ENCODE measurements at regions of chr10 and their contacts with region 1.

Region 1: GRCh38 chr10:30591249-30591670 is 38.3 kb downstream of the LYZL2 start:
- DNase-seq: peak; percentile 55
- H3K4me3 Mint-ChIP-seq: no peak overlapping the region
- H3K27ac Mint-ChIP-seq: no peak overlapping the region
- H3K4me1 Mint-ChIP-seq: no peaks in the 10 kb centered on the region
- H3K27me3 Mint-ChIP-seq: no peaks in the 10 kb centered on the region

Region 2: DNA sequence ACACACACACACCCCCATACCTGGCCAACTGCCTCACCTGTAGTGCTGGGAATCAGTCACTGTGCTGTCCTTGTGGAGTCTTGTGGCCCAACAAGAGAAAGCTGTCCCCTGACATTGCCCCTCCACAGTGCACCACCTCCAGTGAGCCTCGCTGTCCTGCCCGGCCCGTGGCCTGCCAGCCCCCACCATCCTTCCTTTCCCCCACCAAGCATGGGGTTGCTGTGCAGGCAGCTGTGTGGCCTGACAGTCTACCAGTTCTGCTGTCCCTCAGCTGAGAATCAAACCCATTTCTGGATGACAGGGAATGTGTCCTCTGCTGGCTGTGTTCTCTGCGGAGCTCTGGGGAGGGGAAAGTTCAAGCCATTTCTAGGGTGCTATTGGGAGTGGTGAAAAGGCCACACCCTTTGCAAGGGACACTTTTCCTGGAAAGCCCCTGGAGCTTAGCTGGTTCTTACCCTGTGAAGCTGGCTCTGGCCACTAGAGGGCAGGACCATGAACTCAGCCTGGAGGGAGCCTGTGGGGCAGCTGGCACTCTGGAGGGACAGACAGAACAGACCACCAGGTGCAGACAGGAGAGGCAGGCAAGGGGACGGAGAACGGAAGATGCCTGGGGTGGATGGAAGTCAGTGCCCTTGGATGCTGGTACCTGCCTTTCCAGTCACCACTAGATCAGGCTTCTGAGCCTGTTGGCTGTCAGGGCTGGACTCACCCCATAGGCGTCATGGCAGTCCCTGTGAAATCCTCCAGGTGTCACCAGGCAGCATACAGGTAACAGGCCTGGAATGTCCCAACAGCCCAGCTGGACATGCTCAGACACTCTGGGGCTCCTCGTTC is 231.7 kb before region 1 on chr10:
- CTCF ChIA-PET with region 1: interaction called, 16 read pairs
- intact Hi-C with region 1: no loop called
- DNase-seq: peak; percentile 78
- H3K4me3 Mint-ChIP-seq: no peak overlapping the region
- H3K27ac Mint-ChIP-seq: no peak overlapping the region
- H3K4me1 Mint-ChIP-seq: peaks cover 2% of the 10 kb centered on the region
- H3K27me3 Mint-ChIP-seq: no peaks in the 10 kb centered on the region

Region 3: GRCh38 chr10:30398788-30399187 is 192.5 kb before region 1 on chr10:
- CTCF ChIA-PET with region 1: interaction called, 84 read pairs
- intact Hi-C with region 1: loop called (anchors 1 kb)
- DNase-seq: peak; percentile 30
- H3K4me3 Mint-ChIP-seq: no peak overlapping the region
- H3K27ac Mint-ChIP-seq: no peak overlapping the region
- H3K4me1 Mint-ChIP-seq: peaks cover 13% of the 10 kb centered on the region
- H3K27me3 Mint-ChIP-seq: no peaks in the 10 kb centered on the region

Region 4: DNA sequence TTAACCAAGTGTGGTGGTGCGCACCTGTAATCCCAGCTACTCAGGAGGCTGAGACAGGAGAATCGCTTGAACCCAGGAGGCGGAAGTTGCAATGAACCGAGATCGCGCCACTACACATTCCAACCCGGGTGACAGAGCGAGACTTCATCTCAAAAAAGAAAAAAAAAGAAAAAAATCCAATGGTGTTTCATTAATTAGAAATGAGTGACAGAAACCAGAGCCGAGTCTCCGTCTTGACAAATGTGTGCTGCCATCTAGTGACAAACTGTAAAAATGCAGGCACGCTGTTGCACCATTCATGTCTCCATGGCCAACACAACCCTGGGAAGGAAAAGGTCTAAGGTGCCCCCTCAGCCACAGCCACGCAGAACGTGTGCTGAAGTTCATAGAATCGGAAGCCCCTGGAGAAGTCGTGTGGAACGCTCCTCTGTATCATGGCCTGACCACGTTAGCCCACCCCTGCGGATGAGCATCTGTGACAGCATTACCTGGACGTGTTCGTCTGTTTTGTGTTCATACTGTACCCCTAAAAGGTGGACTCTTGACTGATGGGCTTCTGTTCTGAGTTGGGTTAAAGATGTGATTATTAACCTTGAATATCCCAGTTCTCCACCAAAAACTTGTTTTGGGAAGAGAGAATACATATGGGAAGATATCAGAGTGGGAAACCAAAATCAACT is 56.7 kb before region 1 on chr10:
- CTCF ChIA-PET with region 1: interaction called, 13 read pairs
- intact Hi-C with region 1: loop called (anchors 1 kb)
- DNase-seq: peak; percentile 87
- H3K4me3 Mint-ChIP-seq: no peak overlapping the region
- H3K27ac Mint-ChIP-seq: no peak overlapping the region
- H3K4me1 Mint-ChIP-seq: peaks cover 14% of the 10 kb centered on the region
- H3K27me3 Mint-ChIP-seq: no peaks in the 10 kb centered on the region

Region 5: GRCh38 chr10:30639946-30640786 is 48.9 kb after region 1 on chr10:
- CTCF ChIA-PET with region 1: interaction called, 13 read pairs
- intact Hi-C with region 1: no loop called
- DNase-seq: peak; percentile 28
- H3K4me3 Mint-ChIP-seq: no peak overlapping the region
- H3K27ac Mint-ChIP-seq: no peak overlapping the region
- H3K4me1 Mint-ChIP-seq: peaks cover 3% of the 10 kb centered on the region
- H3K27me3 Mint-ChIP-seq: peaks cover 26% of the 10 kb centered on the region

Region 6: GRCh38 chr10:30763918-30764317 is 172.7 kb after region 1 on chr10:
- CTCF ChIA-PET with region 1: no interaction called
- intact Hi-C with region 1: no loop called
- DNase-seq: no peak
- H3K4me3 Mint-ChIP-seq: no peak overlapping the region
- H3K27ac Mint-ChIP-seq: no peak overlapping the region
- H3K4me1 Mint-ChIP-seq: no peaks in the 10 kb centered on the region
- H3K27me3 Mint-ChIP-seq: no peaks in the 10 kb centered on the region

Measured in activated naive CD4-positive, alpha-beta T cell treated with anti-CD3 and anti-CD28 coated beads for 36 hours (primary cell).